OCI-LY7 (cell line): ENCODE measurements at regions of chr20 and their contacts with region 1.

Region 1: GRCh38 chr20:15857173-15857784 is 716.0 kb downstream of the KIF16B start:
- DNase-seq: peak; percentile 84
- H3K4me3 ChIP-seq: peak overlapping the region; percentile 7
- H3K27ac ChIP-seq: peak overlapping the region; percentile 72
- H3K4me1 ChIP-seq: peaks cover 70% of the 10 kb centered on the region
- CTCF ChIP-seq: no peak

Region 2: DNA sequence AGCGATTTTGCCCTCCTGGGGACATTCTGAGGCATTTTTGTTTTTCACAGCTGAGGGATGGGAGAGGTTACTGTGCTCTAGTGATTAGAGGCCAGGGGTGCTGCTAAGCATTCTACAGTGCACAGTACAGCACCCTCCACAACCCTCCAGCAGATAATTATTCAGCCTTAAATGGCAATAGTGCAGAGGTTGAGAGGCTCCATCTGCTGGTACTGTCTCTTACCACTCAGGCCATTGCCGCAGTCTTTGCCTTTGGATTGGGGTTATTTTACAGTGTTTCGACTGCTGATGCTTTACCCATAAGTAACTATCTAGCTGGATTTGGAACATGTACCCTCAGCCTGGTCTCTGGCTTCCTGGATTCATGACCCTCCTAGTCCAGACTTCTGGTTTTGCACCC is 10.6 kb after region 1 on chr20:
- CTCF ChIA-PET with region 1: no interaction called
- POLR2A ChIA-PET with region 1: interaction called, 12 read pairs
- intact Hi-C with region 1: no loop called
- DNase-seq: peak; percentile 32
- H3K4me3 ChIP-seq: no peak overlapping the region
- H3K27ac ChIP-seq: no peak overlapping the region
- H3K4me1 ChIP-seq: no peaks in the 10 kb centered on the region
- CTCF ChIP-seq: peak; percentile 68

Region 3: GRCh38 chr20:16505894-16506293 is 648.6 kb after region 1 on chr20:
- CTCF ChIA-PET with region 1: no interaction called
- POLR2A ChIA-PET with region 1: no interaction called
- intact Hi-C with region 1: no loop called
- DNase-seq: peak; percentile 75
- H3K4me3 ChIP-seq: peak overlapping the region; percentile 17
- H3K27ac ChIP-seq: peak overlapping the region; percentile 69
- H3K4me1 ChIP-seq: peaks cover 20% of the 10 kb centered on the region
- CTCF ChIP-seq: no peak